Activated CD8-positive, alpha-beta memory T cell treated with anti-CD3 and anti-CD28 coated beads, Interleukin-2, amount 10 ng/mL, durations not matched to agents 7 days and 5 days (primary cell): ENCODE measurements at regions of chr10 and their contacts with region 1.

Region 1: GRCh38 chr10:22573820-22574569 is 140.4 kb downstream of the PIP4K2A start:
- DNase-seq: peak; percentile 57
- ATAC-seq: peak; percentile 67
- H3K4me3 Mint-ChIP-seq: peak overlapping the region; percentile 41
- H3K27ac Mint-ChIP-seq: peak overlapping the region; percentile 84
- H3K4me1 Mint-ChIP-seq: peaks cover 55% of the 10 kb centered on the region
- H3K27me3 Mint-ChIP-seq: no peaks in the 10 kb centered on the region

Region 2: DNA sequence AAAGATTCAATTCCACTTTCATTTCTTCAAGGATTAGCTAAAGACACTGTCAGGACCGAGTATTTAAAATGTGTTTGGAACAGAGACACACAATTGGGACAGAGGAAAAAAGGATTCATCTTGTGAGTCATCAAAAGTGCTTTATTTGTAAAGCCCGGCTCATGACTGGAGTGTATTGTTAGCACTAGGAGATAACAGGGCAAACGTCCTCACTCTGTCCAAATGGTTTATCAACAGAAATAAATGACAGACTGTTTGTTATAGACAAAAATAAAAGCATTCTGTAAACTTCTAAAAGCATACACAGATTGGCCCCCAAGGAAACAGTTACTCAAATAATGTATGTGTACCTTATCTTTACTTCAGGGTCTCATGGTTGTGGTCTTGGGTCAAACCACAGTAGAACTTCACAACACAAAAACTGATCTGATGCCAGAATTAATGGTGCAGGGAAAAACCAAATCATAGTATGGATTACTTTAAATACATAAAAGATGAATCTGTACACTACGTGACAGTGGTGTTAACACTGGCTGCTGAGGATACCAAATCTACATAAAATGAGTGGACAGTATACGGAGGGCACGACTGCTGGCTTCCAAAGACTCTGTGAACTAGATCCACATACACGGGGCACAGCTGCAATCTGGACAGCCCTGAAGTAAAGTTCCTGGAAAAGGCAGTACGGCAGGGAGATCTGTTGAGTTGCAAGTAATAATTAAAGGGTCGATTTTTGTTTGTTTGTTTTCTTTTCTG is 39.0 kb before region 1 on chr10:
- CTCF ChIA-PET with region 1: no interaction called
- DNase-seq: no peak
- ATAC-seq: no peak
- H3K4me3 Mint-ChIP-seq: no peak overlapping the region
- H3K27ac Mint-ChIP-seq: no peak overlapping the region
- H3K4me1 Mint-ChIP-seq: peaks cover 2% of the 10 kb centered on the region
- H3K27me3 Mint-ChIP-seq: no peaks in the 10 kb centered on the region

Region 3: DNA sequence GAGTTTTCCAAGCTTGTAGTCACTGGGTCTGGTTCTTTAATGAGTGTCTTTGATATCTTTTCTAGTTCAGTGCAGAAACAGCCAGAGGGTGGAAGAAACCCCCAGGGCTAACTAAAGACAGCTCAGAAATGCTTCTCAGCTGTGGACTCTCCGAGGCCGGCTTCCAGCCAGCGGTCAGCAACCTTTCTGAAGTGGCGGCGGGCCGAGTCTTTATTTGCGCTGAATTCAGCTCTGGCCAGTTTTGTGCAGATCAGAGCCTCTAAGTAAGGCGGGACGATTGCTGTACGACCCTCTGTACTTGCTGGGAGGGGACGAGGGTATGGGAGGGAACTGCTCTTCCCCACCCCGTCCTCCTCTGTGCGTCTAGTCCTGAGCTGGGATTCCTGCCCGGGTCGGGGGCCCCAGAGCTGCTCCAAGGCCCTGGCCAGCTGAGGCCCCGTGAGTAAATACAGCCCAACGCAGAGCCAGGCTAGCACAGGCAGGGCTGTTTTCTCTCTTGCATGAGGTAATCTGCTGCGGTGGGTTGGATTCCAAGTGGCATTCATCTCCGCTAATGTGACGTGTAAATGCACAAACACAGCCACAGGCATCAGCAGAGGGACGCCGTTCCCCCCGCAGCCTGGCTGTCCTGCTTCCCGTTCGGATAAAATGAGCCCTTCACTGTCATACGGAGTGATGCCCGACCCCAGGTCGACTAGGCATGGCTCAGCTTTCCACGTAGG is 19.4 kb before region 1 on chr10:
- CTCF ChIA-PET with region 1: interaction called, 10 read pairs
- DNase-seq: no peak
- ATAC-seq: no peak
- H3K4me3 Mint-ChIP-seq: no peak overlapping the region
- H3K27ac Mint-ChIP-seq: no peak overlapping the region
- H3K4me1 Mint-ChIP-seq: peaks cover 9% of the 10 kb centered on the region
- H3K27me3 Mint-ChIP-seq: no peaks in the 10 kb centered on the region

Region 4: DNA sequence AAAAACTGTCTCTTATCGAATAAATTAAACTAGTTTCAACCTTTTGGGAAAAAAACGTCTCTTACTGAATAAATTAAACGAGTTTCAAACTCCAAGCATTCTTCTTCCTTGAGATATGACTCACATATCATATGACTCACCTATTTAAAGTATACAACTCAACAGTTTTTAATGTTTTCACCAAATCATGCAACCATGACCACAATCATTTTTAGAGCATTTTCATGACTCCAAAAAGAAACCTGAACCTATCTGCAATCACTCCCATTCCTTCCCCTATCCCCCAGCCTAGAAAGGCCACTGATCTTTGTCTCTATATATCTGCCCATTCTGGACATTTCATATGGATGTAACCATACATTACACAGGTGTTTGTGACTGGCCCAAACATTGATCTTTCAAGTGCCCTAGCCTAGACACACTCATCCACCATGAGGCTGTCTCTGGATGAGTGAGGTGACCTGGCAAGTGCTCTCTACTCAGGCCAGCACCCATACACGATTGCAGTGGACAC is 25.1 kb after region 1 on chr10:
- CTCF ChIA-PET with region 1: interaction called, 11 read pairs
- DNase-seq: no peak
- ATAC-seq: peak; percentile 24
- H3K4me3 Mint-ChIP-seq: peak overlapping the region; percentile 1
- H3K27ac Mint-ChIP-seq: peak overlapping the region; percentile 77
- H3K4me1 Mint-ChIP-seq: peaks cover 75% of the 10 kb centered on the region
- H3K27me3 Mint-ChIP-seq: no peaks in the 10 kb centered on the region

Region 5: DNA sequence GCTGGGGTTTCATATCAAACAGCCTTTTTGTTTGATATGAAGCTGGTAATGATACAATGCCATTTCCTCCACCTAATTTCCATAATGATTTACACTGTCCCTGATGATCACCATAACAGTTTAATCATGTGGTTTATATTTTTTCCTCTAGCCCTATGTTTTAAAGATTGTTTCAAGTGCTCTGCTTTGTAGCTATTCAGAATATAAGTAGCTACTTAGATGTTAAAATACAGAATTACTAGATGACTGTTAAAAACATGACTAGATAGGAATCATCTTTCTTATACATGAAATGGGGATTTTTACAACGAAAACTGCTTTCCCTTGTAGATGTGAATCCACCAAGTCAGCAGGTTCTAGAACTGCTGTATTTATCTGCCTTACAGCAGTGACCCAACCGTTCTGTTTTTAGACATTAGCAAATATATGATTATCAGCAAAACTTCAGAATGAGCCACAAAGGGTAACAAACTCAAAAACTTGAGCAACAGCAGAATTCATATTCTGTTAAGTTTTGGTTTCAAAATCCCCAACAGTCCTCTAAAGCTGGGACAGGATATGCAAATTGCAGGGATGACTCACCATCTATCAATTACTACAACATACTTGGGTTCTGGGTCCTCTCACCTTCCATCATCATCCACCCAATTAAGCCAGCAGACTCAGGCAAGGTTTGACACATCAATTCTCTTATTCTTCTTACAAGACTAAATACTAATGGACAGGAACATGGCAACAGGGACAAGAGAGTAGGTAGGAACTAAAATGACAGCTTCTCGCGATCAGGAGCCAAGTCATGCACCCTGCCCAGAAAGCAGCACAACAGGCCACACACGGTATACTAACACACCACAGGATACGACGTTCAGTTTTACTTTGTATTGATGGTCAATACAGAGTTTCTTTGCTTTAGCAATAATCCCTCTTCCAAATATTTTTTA is 56.5 kb after region 1 on chr10:
- CTCF ChIA-PET with region 1: interaction called, 10 read pairs
- DNase-seq: peak; percentile 63
- ATAC-seq: peak; percentile 85
- H3K4me3 Mint-ChIP-seq: peak overlapping the region; percentile 74
- H3K27ac Mint-ChIP-seq: peak overlapping the region; percentile 97
- H3K4me1 Mint-ChIP-seq: peaks cover 87% of the 10 kb centered on the region
- H3K27me3 Mint-ChIP-seq: no peaks in the 10 kb centered on the region

Region 6: GRCh38 chr10:22911889-22912762 is 338.1 kb after region 1 on chr10:
- CTCF ChIA-PET with region 1: no interaction called
- DNase-seq: no peak
- ATAC-seq: no peak
- H3K4me3 Mint-ChIP-seq: no peak overlapping the region
- H3K27ac Mint-ChIP-seq: no peak overlapping the region
- H3K4me1 Mint-ChIP-seq: no peaks in the 10 kb centered on the region
- H3K27me3 Mint-ChIP-seq: no peaks in the 10 kb centered on the region

Region 7: GRCh38 chr10:22988581-22989360 is 414.8 kb after region 1 on chr10:
- CTCF ChIA-PET with region 1: interaction called, 26 read pairs
- DNase-seq: peak; percentile 75
- ATAC-seq: peak; percentile 72
- H3K4me3 Mint-ChIP-seq: no peak overlapping the region
- H3K27ac Mint-ChIP-seq: no peak overlapping the region
- H3K4me1 Mint-ChIP-seq: peaks cover 19% of the 10 kb centered on the region
- H3K27me3 Mint-ChIP-seq: peaks cover 14% of the 10 kb centered on the region